Gastrocnemius medialis (tissue), 4 donors: ENCODE measurements at regions of chr1 and their contacts with region 1.

Region 1: GRCh38 chr1:11893907-11894251 is 32.3 kb downstream of the KIAA2013 start:
- DNase-seq: peak in 1 of 2 donors; percentile 48
- ATAC-seq: peak; percentile 87 to 90
- H3K4me3 ChIP-seq: no peak overlapping the region
- H3K27ac ChIP-seq: no peak overlapping the region
- H3K4me1 ChIP-seq: no peaks in the 10 kb centered on the region
- H3K27me3 ChIP-seq: peaks cover 13 to 21% (median 20%) of the 10 kb centered on the region in 3 donors
- CTCF ChIP-seq: peak; percentile 88 to 94 (median 91)
- POLR2A ChIP-seq: no peak

Region 2: DNA sequence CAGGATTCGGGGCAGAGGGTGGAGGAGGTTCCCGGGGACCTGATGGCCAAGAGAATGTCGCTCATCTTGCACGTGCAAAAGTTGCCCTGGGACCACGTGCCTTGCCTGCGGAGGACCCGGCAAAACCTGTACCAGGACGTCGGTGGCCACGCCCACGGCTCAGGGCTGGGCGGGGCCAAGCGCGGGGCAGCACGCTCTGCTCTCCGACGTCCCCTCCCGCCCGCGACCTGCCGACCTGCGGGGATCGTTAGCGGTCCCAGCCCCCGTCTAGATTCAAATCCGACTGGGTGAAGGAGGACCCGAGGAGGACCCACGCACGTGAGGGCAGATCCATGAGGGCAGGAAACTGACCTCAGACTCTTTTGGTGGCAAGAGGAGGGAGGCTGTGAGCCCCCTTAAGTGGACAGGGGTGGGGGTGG is 131.9 kb before region 1 on chr1 and contains the start of gene C1orf167:
- in situ Hi-C with region 1: no loop called
- intact Hi-C with region 1: no loop called
- DNase-seq: no peak
- ATAC-seq: no peak
- H3K4me3 ChIP-seq: no peak within 1 kb of the TSS
- H3K27ac ChIP-seq: no peak within 1 kb of the TSS
- H3K4me1 ChIP-seq: no peaks in the 10 kb centered on the region
- H3K27me3 ChIP-seq: peaks cover 10 to 16% (median 13%) of the 10 kb centered on the region in 3 donors
- CTCF ChIP-seq: no peak
- POLR2A ChIP-seq: no peak
- total RNA-seq, gene C1orf167: 1.00 to 1.4 TPM in 2 of 4 donors, not detected in the others

Region 3: GRCh38 chr1:11781298-11781697 is 112.6 kb before region 1 on chr1:
- in situ Hi-C with region 1: no loop called
- intact Hi-C with region 1: no loop called
- DNase-seq: no peak
- ATAC-seq: no peak
- H3K4me3 ChIP-seq: no peak overlapping the region
- H3K27ac ChIP-seq: no peak overlapping the region
- H3K4me1 ChIP-seq: peaks cover 9 to 18% of the 10 kb centered on the region in 2 donors
- H3K27me3 ChIP-seq: no peaks in the 10 kb centered on the region
- CTCF ChIP-seq: no peak
- POLR2A ChIP-seq: no peak

Region 4: DNA sequence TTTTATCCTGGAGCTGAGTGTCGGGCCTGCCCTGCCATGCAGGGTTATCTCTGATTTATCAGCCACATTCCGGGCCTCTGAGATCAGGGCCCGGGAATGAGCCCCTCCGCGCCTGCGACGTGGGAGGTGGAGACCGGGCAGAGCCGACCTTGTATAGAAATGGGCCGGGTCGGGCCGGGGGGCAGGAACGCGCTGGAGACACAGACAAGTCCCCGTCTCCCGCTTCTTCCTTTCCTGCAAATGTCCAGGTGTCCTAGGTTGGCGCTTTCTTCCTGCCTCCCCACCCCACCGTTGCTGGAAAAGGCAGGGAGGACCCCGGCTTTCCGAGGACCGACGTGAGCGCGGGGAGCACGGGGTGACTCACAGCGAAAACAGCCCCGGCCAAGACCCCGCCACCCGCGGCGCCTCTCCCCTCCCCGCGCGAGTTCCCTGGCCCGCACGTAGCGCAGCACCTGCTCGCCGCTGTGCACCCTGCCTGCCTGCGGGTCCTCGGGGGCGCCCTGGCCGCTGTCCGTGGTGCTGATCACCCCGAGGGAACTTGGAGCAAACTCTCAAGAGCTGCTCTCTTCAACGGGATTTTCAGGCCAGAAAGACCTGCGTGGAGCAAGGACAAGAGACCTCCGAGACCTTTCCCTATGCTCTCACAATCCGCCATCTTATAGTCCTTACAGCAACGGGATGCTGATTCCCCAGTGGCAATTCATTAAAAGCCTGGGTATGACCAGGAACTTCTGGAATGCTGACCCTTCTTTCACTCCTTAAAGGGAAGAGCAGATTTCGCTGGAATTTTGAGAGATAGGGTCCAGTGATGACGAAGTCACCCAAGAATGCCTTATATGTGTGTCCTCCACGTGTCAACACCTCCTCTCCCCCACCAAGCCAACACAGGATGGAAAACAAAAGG is 34.7 kb before region 1 on chr1:
- in situ Hi-C with region 1: no loop called
- intact Hi-C with region 1: loop called (anchors 2 kb)
- DNase-seq: peak in 1 of 2 donors; percentile 30
- ATAC-seq: no peak
- H3K4me3 ChIP-seq: no peak overlapping the region
- H3K27ac ChIP-seq: no peak overlapping the region
- H3K4me1 ChIP-seq: no peaks in the 10 kb centered on the region
- H3K27me3 ChIP-seq: peaks cover 32 to 45% (median 36%) of the 10 kb centered on the region in 3 donors
- CTCF ChIP-seq: peak in 2 of 5 experiments; percentile 15 to 35
- POLR2A ChIP-seq: no peak

Region 5: GRCh38 chr1:12019858-12020509 is 126.1 kb after region 1 on chr1:
- in situ Hi-C with region 1: no loop called
- intact Hi-C with region 1: no loop called
- DNase-seq: no peak
- ATAC-seq: peak in 1 of 2 donors; percentile 3
- H3K4me3 ChIP-seq: peak overlapping the region; percentile 67 to 93 (median 84)
- H3K27ac ChIP-seq: peak overlapping the region; percentile 83 to 90 (median 84)
- H3K4me1 ChIP-seq: peaks cover 6 to 8% of the 10 kb centered on the region in 2 donors
- H3K27me3 ChIP-seq: no peaks in the 10 kb centered on the region
- CTCF ChIP-seq: no peak
- POLR2A ChIP-seq: no peak